ENCODE measurements at regions of chr7 and their contacts with region 1.

Region 1: DNA sequence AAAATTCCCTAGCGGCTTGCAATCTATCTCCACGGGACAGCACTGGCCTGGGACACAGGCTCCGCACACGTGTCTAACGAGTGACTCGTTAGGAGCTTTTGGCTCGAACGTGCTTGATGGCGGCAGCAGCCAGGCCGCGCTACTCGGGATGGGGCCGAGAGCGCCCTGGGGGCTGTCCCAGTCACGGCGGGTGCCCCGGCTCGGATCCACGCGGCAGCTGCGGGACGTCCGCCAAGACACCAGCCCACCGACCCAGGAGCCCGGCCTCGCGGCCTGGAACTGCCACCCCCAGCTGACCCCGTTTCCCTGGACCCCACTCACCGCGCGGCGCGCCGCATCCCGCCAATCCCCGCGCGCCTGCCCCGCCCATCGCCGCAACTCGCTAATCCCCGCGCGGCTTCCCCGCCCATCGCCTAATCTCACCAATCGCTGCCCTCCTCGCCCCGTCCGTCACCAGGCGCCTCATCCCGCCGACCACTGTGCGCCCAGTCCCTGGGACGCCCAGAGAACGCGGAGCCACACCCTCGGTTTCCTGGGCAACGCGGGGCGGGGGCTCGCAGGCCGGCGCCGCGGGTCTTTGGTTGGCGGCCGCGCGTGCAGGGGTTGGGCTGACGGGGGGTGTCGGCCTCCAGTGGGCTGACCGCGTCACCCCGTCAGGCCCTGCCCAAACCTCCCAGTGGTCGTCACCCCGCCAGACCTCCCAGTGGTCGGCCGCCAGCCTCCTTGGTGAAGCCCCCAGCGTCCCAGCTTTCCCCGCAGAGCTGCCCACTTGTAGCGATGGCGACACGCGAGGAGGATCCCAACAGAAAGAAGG is at the start of gene POLD2:
- DNase-seq: peak; percentile 100
- H3K4me3 Mint-ChIP-seq: peak within 1 kb of the TSS; percentile 88
- H3K27ac Mint-ChIP-seq: peak within 1 kb of the TSS; percentile 84
- H3K4me1 Mint-ChIP-seq: peaks cover 27% of the 10 kb centered on the region
- H3K27me3 Mint-ChIP-seq: peaks cover 17% of the 10 kb centered on the region
- total RNA-seq, gene POLD2: 259 and 286 TPM in 2 replicates

Region 2: GRCh38 chr7:44145969-44146911 is 22.8 kb after region 1 on chr7:
- intact Hi-C with region 1: loop called (anchors 1 kb)
- DNase-seq: peak; percentile 91
- H3K4me3 Mint-ChIP-seq: peak overlapping the region; percentile 82
- H3K27ac Mint-ChIP-seq: peak overlapping the region; percentile 82
- H3K4me1 Mint-ChIP-seq: peaks cover 10% of the 10 kb centered on the region
- H3K27me3 Mint-ChIP-seq: peaks cover 10% of the 10 kb centered on the region

Region 3: DNA sequence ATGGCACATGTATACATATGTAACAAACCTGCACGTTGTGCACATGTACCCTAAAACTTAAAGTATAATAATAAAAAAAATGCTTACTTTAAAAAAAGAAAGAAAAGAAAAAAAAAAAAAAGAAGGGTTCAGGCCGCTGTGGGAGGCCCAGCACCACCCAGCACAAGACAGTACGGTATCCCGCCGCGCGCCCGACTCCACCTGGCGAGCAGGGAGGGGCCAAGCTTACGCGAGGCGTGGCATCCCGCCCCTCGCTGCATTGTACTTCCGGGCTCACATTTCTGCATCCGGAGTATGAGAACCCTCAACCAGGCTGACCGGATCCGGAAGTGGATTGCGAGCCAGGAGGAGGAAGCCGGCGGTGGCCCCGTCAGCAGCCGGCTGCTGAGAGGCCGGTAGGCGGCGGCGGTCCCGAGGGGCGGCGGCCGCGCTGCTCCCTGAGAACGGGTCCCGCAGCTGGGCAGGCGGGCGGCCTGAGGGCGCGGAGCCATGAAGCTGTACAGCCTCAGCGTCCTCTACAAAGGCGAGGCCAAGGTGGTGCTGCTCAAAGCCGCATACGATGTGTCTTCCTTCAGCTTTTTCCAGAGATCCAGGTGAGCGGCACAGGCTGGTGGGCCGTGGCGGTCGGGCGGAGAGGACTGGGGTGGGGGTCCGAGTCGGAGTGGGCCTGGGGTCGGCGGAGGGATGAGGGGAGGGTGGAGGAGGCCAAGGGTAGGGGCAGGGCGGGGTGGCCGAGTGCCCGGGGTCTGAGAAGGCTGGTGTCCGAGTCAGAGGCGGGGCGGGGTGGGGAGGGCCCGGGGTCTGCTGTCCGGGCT is 77.5 kb after region 1 on chr7 and contains the start of gene YKT6:
- intact Hi-C with region 1: loop called (anchors 5 kb)
- DNase-seq: peak; percentile 98
- H3K4me3 Mint-ChIP-seq: peak within 1 kb of the TSS; percentile 89
- H3K27ac Mint-ChIP-seq: peak within 1 kb of the TSS; percentile 65
- H3K4me1 Mint-ChIP-seq: peaks cover 33% of the 10 kb centered on the region
- H3K27me3 Mint-ChIP-seq: peaks cover 2% of the 10 kb centered on the region
- total RNA-seq, gene YKT6: 87.3 and 92.8 TPM in 2 replicates